IMR-90 (cell line): ENCODE measurements at regions of chr10 and their contacts with region 1.

Region 1: GRCh38 chr10:119750391-119751230 is 24.8 kb downstream of the INPP5F start:
- DNase-seq: peak; percentile 82
- ATAC-seq: peak; percentile 100
- H3K4me3 ChIP-seq: no peak overlapping the region
- H3K27ac ChIP-seq: no peak overlapping the region
- H3K4me1 ChIP-seq: peaks cover 5% of the 10 kb centered on the region
- H3K27me3 ChIP-seq: no peaks in the 10 kb centered on the region
- CTCF ChIP-seq: peak; percentile 95
- POLR2A ChIP-seq: 0 out of 2 replicates have a peak, but pooled peaks have one; percentile 40
- RAD21 ChIP-seq: peak; percentile 99

Region 2: DNA sequence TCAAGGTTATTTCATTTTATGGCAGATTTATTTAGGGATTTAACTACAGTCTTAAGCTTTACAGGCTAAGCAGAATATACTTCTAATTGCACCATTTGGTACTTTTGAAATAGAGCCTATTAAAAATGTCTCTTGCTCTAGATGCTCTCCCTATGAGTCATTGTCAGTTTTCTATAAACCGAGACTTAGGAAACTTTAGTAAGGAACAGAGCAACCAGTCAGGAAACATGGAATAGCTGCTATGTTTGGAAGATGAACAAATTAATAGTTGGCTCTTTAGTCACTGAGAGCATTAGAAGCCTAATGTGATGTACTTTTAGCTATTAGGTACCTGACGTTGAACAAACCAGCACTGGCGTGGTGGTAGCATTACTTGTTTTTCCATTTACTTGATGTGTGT is 10.5 kb after region 1 on chr10:
- CTCF ChIA-PET with region 1: interaction called, 19 read pairs
- POLR2A ChIA-PET with region 1: no interaction called
- dilution Hi-C with region 1: no loop called
- in situ Hi-C with region 1: no loop called
- intact Hi-C with region 1: no loop called
- DNase-seq: peak; percentile 94
- ATAC-seq: peak; percentile 88
- H3K4me3 ChIP-seq: no peak overlapping the region
- H3K27ac ChIP-seq: no peak overlapping the region
- H3K4me1 ChIP-seq: peaks cover 10% of the 10 kb centered on the region
- H3K27me3 ChIP-seq: no peaks in the 10 kb centered on the region
- CTCF ChIP-seq: no peak
- POLR2A ChIP-seq: no peak
- RAD21 ChIP-seq: no peak

Region 3: GRCh38 chr10:119849031-119849789 is 98.6 kb after region 1 on chr10:
- CTCF ChIA-PET with region 1: interaction called, 4 read pairs
- POLR2A ChIA-PET with region 1: no interaction called
- dilution Hi-C with region 1: no loop called
- in situ Hi-C with region 1: loop called (anchors 5 kb)
- intact Hi-C with region 1: no loop called
- DNase-seq: peak; percentile 76
- ATAC-seq: peak; percentile 91
- H3K4me3 ChIP-seq: no peak overlapping the region
- H3K27ac ChIP-seq: peak overlapping the region; percentile 79
- H3K4me1 ChIP-seq: peaks cover 10% of the 10 kb centered on the region
- H3K27me3 ChIP-seq: no peaks in the 10 kb centered on the region
- CTCF ChIP-seq: no peak
- POLR2A ChIP-seq: no peak
- RAD21 ChIP-seq: no peak

Region 4: DNA sequence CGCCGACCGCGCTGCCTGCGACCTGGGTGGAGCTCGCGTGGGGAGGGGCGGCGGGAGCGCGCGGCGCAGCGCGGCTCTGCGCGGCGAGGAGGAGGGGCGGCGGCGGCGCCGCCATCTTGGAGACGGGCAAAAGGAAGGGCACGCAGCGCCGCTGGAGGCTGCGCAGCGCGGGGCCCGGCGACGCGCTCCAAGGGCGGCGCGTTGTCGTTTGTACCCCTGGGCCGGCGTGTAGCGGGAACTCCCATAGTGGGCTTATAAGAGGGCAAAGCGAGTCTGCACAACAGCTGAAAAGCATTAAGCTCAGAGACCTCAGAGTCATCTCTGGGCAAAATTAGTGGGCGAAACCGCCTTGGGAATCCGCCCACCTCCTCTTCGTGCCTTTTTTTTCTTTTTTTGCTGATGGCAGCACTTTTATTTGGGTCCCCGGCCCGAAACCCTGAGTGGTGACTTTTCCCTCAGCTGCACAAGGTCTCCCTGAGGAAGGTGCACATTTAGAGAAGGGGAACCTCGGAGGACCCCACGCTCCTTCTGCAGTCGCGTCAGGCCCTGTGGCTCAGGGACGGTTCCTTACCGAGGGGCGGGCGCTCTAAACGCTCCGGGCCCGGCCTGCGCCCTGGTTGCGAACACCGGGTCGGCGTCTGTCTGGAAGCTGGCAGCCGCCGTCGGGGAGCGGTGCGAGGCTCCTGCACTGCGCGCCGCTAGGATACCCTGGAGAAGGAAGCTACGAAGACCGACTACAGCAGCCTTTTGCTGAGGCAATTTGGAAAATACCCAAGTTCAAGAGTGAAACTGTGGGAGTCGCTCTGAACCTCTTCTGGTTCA is 122.5 kb after region 1 on chr10:
- CTCF ChIA-PET with region 1: interaction called, 14 read pairs
- POLR2A ChIA-PET with region 1: no interaction called
- dilution Hi-C with region 1: no loop called
- in situ Hi-C with region 1: no loop called
- intact Hi-C with region 1: no loop called
- DNase-seq: peak; percentile 80
- ATAC-seq: peak; percentile 96
- H3K4me3 ChIP-seq: peak overlapping the region; percentile 55
- H3K27ac ChIP-seq: peak overlapping the region; percentile 66
- H3K4me1 ChIP-seq: no peaks in the 10 kb centered on the region; the same call in 1 of the 2 replicates
- H3K27me3 ChIP-seq: no peaks in the 10 kb centered on the region
- CTCF ChIP-seq: no peak
- POLR2A ChIP-seq: no peak
- RAD21 ChIP-seq: no peak

Region 5: DNA sequence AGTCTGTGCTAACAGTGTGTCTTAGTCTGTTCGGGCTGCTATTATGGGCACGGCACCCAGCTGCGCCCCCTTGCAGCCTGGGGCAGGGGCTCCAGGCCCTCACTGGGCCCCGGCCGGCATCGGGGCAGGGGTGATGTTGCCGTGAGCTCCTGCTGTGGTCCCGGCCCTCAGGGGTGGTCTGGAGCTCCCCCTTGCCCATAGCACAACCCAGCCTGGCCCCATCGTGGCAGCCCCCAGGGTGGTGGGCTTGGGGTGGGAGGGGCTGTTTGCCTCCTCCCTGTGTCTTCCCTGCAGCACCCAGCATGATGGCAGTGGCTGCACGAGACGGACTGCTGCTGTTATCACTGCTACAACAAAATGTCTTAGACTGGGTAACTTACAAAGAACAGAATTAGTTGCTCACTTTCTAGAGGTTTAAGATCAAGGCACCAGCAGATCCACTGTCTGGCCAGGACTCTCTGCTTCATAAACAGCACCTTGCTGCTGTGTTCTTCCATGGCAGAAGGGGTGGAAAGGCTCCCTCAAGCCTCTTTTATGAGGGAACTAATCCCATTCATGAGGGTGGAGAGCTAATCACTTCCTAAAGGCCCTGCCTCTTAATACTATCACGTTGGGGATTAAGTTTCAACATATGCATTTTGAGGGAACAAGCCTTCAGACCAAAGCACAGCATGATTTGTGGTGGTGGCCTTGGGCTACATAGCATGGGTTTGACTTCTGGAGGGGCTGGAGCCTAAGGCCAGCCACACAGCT is 291.4 kb after region 1 on chr10:
- CTCF ChIA-PET with region 1: no interaction called
- POLR2A ChIA-PET with region 1: no interaction called
- dilution Hi-C with region 1: no loop called
- in situ Hi-C with region 1: no loop called
- intact Hi-C with region 1: no loop called
- DNase-seq: no peak
- ATAC-seq: no peak
- H3K4me3 ChIP-seq: no peak overlapping the region
- H3K27ac ChIP-seq: no peak overlapping the region
- H3K4me1 ChIP-seq: no peaks in the 10 kb centered on the region
- H3K27me3 ChIP-seq: no peaks in the 10 kb centered on the region
- CTCF ChIP-seq: no peak
- POLR2A ChIP-seq: no peak
- RAD21 ChIP-seq: no peak